Activated T-helper 1 cell treated with anti-CD3 and anti-CD28 coated beads, Interleukin-12 subunit alpha, Interleukin-12 subunit beta, Interleukin-2, Interleukin-4 antibody, amounts not matched to agents 30 ng/mL and 10 ng/mL and 1 ng/mL, durations not matched to agents 14 hours and 24 hours and 36 hours (primary cell): ENCODE measurements at regions of chr15 and their contacts with region 1.

Region 1: DNA sequence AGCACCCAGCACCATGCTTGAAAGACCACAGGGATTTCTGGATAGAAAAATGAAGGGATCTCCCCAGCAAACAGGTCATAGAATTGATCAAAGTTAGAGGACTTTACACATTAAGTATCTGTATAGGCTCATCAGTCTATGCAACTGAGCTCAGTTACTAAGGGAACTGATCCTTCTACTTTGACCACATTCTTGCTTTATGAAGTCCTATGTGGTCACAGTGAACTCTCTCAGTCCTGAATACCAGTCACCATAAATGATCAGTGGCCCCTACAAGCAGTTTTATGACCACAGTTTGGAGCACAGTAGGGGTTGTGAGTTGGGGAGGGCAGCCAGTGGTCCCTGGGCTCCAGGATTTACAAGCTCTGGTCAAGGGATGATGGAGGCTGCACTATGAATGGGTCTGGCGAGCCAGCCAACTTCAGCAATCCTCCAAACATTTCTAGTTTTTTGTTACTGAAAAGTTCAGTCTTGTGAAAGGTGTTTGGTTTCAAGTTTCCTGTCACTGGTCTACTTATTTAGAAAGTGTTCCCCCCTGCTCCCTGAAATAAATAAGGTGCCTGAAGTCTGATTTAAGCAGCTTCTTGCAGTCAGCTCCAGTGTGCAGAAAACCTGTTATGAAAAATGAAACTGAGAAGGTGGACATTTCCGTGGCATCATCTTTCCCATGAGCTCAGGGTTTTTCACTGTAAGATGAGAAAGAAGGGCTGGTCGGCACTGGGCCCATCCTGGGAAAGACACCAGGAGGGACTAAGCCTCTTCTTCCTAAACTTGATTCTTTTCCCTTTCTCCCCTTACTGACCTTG is 75.5 kb downstream of the DAPK2 start:
- DNase-seq: peak; percentile 27
- H3K4me3 Mint-ChIP-seq: peak overlapping the region; percentile 77
- H3K27ac Mint-ChIP-seq: peak overlapping the region; percentile 100
- H3K4me1 Mint-ChIP-seq: peaks cover 56% of the 10 kb centered on the region
- H3K27me3 Mint-ChIP-seq: no peaks in the 10 kb centered on the region

Region 2: DNA sequence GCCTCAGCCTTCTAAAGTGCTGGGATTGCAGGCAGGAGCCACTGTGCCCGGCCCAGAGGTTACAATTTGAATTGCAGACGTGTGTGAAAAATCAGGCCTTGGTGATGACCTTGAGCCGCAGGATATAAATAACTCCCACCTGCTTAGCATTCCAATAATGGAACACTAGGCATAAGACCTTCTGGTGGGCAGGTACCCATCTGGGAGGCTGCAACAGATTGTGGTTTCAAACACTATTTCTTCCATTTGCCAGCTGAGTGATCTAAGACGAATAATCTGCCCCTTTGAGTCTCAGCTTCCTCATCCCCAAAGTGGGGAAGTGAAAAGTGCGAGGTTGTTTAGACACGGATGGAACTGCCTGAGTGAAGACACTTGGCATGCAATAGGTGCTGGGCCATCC is 89.4 kb before region 1 on chr15:
- intact Hi-C with region 1: no loop called
- DNase-seq: no peak
- H3K4me3 Mint-ChIP-seq: no peak overlapping the region
- H3K27ac Mint-ChIP-seq: no peak overlapping the region
- H3K4me1 Mint-ChIP-seq: peaks cover 27% of the 10 kb centered on the region
- H3K27me3 Mint-ChIP-seq: no peaks in the 10 kb centered on the region

Region 3: GRCh38 chr15:63896336-63897115 is 74.3 kb before region 1 on chr15:
- intact Hi-C with region 1: loop called (anchors 1 kb)
- DNase-seq: peak; percentile 67
- H3K4me3 Mint-ChIP-seq: peak overlapping the region; percentile 17
- H3K27ac Mint-ChIP-seq: peak overlapping the region; percentile 61
- H3K4me1 Mint-ChIP-seq: peaks cover 83% of the 10 kb centered on the region
- H3K27me3 Mint-ChIP-seq: peaks cover 4% of the 10 kb centered on the region

Region 4: GRCh38 chr15:63915873-63916771 is 54.7 kb before region 1 on chr15:
- intact Hi-C with region 1: no loop called
- DNase-seq: no peak
- H3K4me3 Mint-ChIP-seq: no peak overlapping the region
- H3K27ac Mint-ChIP-seq: no peak overlapping the region
- H3K4me1 Mint-ChIP-seq: peaks cover 24% of the 10 kb centered on the region
- H3K27me3 Mint-ChIP-seq: peaks cover 3% of the 10 kb centered on the region

Region 5: GRCh38 chr15:63939531-63940130 is 31.2 kb before region 1 on chr15:
- intact Hi-C with region 1: loop called (anchors 1 kb)
- DNase-seq: peak; percentile 35
- H3K4me3 Mint-ChIP-seq: peak overlapping the region; percentile 40
- H3K27ac Mint-ChIP-seq: peak overlapping the region; percentile 91
- H3K4me1 Mint-ChIP-seq: peaks cover 56% of the 10 kb centered on the region
- H3K27me3 Mint-ChIP-seq: no peaks in the 10 kb centered on the region

Region 6: DNA sequence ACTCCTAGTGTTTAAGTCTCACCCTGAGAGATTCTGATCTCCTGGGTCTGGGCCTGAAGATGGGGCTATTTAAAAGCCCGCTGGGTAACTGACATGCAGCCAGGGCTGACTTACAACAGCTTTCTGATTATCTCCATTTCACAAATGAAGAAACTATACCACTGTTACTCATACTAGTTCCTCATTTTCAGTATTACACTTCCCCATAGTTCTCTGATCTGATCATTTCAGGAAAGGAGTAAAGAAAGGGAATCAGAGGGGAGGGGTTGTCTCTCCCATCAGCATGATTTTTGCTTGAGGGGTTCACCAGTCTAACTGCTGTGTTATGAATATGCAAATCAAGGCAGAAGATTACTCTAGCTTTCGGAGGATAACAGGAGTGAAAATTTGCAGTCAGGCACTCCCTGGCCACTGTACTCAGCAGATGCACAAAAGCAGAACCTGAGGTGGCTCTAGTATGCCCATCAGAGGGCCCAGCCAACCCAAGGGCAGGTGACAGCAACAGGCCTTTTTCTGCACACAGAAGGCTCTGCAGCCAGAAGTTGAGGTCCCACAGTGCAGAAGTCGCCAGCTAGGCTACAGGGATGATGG is 16.0 kb after region 1 on chr15:
- intact Hi-C with region 1: loop called (anchors 1 kb)
- DNase-seq: no peak
- H3K4me3 Mint-ChIP-seq: no peak overlapping the region
- H3K27ac Mint-ChIP-seq: no peak overlapping the region
- H3K4me1 Mint-ChIP-seq: peaks cover 18% of the 10 kb centered on the region
- H3K27me3 Mint-ChIP-seq: no peaks in the 10 kb centered on the region

Region 7: GRCh38 chr15:64024172-64025050 is 53.6 kb after region 1 on chr15:
- intact Hi-C with region 1: loop called (anchors 5 kb)
- DNase-seq: no peak
- H3K4me3 Mint-ChIP-seq: no peak overlapping the region
- H3K27ac Mint-ChIP-seq: no peak overlapping the region
- H3K4me1 Mint-ChIP-seq: peaks cover 21% of the 10 kb centered on the region
- H3K27me3 Mint-ChIP-seq: peaks cover 2% of the 10 kb centered on the region

Region 8: GRCh38 chr15:64046347-64047153 is 75.7 kb after region 1 on chr15 and contains the start of gene DAPK2:
- intact Hi-C with region 1: loop called (anchors 1 kb)
- DNase-seq: peak; percentile 64
- H3K4me3 Mint-ChIP-seq: peak within 1 kb of the TSS; percentile 81
- H3K27ac Mint-ChIP-seq: peak within 1 kb of the TSS; percentile 49
- H3K4me1 Mint-ChIP-seq: peaks cover 36% of the 10 kb centered on the region
- H3K27me3 Mint-ChIP-seq: peaks cover 26% of the 10 kb centered on the region
- total RNA-seq, gene DAPK2: 8.6 and 8.7 TPM in 2 replicates